ENCODE measurements at regions of chr12 and their contacts with region 1.

Region 1: GRCh38 chr12:33129500-33129899 is 232.9 kb upstream of the PKP2 start:
- ATAC-seq: no peak
- H3K4me3 ChIP-seq: no peak overlapping the region
- H3K27ac ChIP-seq: no peak overlapping the region
- H3K4me1 ChIP-seq: no peaks in the 10 kb centered on the region

Region 2: DNA sequence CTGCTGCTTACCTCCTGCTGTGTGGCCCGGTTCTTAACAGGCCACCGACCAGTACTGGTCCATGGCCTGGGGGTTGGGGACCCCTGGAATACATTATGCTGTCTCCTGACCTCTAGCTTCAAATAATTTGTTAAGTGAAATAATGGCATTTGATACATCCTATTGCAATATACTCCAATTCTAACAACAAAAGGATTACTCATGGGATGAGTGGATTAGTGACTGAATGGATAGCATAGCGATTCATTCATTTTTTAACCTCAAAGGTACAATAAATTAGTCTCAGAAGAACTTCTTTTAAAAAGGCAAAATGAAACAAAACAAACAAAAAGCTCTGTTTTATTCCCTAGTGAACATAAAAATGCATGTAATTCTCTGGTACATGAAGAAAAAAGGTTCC is 85.1 kb before region 1 on chr12:
- in situ Hi-C with region 1: loop called in 1 of 9 experiments (anchors 25 kb)
- ATAC-seq: no peak
- H3K4me3 ChIP-seq: no peak overlapping the region
- H3K27ac ChIP-seq: no peak overlapping the region
- H3K4me1 ChIP-seq: peaks cover 8 to 12% of the 10 kb centered on the region in 2 donors